Tibial artery (tissue), 4 donors: ENCODE measurements at regions of chr22 and their contacts with region 1.

Region 1: DNA sequence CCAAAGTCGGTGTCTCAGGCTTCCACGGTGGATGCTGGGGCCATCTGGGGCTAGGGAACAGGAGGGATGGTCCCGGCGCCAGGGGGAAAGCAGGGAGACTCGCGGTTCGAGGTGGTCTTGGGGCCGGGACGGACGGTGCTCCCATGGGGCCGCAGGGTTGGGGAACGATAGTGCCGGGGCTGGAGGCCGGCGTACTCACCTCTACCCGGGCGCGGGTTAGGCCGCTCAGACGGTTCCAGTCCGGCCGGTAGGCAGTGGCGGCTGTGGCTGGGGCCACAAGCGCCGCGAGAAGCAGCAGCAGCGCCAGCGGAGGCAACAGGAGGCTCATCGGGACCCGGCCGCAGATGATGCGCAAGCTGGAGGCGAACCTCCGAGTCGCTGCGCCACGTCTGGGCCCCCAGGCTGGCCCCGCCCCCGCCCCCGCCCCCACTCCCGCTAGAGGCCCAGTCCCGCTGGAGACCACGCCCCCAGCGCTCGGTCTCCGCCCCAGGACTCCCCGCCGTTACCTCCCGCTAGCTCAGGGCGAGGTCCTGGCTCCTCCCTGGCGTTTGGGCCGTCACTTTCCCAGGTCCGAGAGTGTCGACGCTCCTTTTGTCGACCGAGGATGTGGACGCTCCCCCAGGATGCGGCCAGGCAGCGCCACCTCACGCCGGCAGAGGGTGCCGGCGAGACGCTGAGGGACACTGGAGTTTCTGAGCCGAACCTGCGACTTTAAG is at the start of gene SELENOM:
- DNase-seq: peak; percentile 96 to 99
- H3K4me3 ChIP-seq: peak within 1 kb of the TSS; percentile 94 to 97
- H3K27ac ChIP-seq: peak within 1 kb of the TSS; percentile 99 to 100
- H3K4me1 ChIP-seq: peaks cover 0 to 48% (median 41%) of the 10 kb centered on the region in 4 donors
- H3K27me3 ChIP-seq: no peaks in the 10 kb centered on the region
- CTCF ChIP-seq: peak; percentile 95 to 98

Region 2: DNA sequence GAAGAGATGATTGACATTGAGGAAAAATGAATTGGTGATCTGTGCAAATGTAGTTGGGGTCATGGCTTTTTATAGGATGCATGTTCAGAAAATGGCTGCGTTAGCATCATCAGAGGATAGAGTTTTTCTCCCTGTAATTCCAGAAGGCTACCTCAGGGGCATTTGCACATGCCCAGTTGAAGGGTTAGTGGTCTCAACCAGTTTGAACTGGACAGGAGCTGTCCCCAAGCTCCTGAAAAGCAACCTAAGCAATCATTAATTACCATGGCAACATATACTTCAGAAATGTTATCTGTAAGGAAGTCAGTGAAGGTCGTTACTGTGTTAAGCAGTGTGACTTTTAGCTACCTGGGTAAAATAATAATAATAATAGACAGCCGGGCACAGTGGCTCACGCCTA is 109.0 kb before region 1 on chr22:
- intact Hi-C with region 1: no loop called
- DNase-seq: no peak
- H3K4me3 ChIP-seq: no peak overlapping the region
- H3K27ac ChIP-seq: peak overlapping the region in 1 of 2 donors; percentile 50
- H3K4me1 ChIP-seq: peaks cover 0 to 29% (median 2%) of the 10 kb centered on the region in 4 donors
- H3K27me3 ChIP-seq: no peaks in the 10 kb centered on the region
- CTCF ChIP-seq: no peak

Region 3: GRCh38 chr22:31089160-31090100 is 17.9 kb before region 1 on chr22:
- intact Hi-C with region 1: loop called (anchors 2 kb)
- DNase-seq: peak in 1 of 2 donors; percentile 81
- H3K4me3 ChIP-seq: no peak overlapping the region
- H3K27ac ChIP-seq: peak overlapping the region; percentile 99 to 100
- H3K4me1 ChIP-seq: peaks cover 0 to 94% (median 91%) of the 10 kb centered on the region in 4 donors
- H3K27me3 ChIP-seq: no peaks in the 10 kb centered on the region
- CTCF ChIP-seq: peak; percentile 79 to 85

Region 4: DNA sequence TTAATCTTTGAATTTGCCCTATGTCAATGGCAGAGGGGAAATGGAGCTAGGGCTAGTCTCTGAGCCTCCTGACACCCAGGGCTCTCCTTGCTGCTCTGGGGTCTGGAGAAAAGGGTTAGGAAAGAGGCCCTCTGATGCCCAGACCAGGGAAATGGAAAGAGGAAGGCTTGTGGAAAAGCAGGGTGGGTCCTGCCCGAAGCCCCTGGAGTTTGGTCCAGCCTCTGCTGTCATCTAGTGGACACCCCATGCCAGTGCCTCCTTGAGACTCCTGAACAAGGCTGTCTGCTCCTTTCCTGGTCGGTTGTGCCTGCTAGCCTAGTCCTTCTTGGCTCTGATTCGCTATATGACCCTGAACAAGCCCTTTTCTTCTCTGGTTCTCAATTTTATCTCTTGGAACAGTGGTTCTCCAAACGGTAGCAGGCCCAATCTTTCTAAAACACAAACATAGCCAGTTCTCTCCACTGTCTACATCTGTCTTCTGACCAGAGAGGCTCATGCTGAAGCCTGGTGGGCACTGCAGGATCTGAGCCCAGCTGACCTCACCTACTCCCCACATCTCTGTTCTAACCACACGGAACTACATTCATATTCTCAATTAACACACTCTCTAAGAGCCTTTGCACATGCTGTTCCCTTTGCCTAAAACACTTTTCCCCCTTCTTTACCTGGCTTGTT is 41.8 kb after region 1 on chr22:
- intact Hi-C with region 1: loop called (anchors 5 kb)
- DNase-seq: peak; percentile 61 to 82
- H3K4me3 ChIP-seq: no peak overlapping the region
- H3K27ac ChIP-seq: peak overlapping the region; percentile 62 to 74
- H3K4me1 ChIP-seq: peaks cover 0 to 31% (median 16%) of the 10 kb centered on the region in 4 donors
- H3K27me3 ChIP-seq: no peaks in the 10 kb centered on the region
- CTCF ChIP-seq: peak; percentile 91 to 95

Region 5: DNA sequence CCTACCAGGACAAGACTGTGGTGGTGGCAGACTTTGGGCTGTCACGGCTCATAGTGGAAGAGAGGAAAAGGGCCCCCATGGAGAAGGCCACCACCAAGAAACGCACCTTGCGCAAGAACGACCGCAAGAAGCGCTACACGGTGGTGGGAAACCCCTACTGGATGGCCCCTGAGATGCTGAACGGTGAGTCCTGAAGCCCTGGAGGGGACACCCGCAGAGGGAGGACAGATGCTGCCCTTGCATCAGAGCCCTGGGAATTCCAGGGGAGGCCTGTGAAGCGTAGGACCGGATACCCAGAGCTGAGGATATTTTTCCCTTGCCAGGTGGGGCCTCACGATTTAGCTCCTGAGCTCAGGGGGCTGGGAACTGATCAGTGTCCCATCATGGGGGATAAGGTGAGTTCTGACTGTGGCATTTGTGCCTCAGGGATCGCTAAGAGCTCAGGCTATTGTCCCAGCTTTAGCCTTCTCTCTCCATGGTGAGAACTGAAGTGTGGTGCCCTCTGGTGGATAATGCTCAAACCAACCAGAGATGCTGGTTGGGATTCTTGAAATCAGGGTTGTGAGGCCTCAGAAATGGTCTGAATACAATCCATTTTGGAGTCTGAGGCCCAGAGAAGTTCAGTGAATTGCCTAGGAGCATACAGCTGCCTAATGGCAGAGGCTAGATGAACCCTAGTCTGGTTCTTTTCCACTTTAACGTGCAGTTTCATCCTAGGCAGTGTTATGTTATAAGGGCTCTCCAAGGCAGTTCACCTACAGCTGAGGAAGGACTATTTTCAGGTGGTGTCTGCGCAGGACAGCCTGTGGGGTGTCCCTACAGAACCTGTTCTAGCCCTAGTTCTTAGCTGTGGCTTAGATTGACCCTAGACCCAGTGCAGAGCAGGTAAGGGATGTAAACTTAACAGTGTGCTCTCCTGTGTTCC is 165.4 kb after region 1 on chr22:
- intact Hi-C with region 1: loop called (anchors 5 kb)
- DNase-seq: peak; percentile 62 to 77
- H3K4me3 ChIP-seq: no peak overlapping the region
- H3K27ac ChIP-seq: peak overlapping the region in 1 of 2 donors; percentile 6
- H3K4me1 ChIP-seq: peaks cover 0 to 5% (median 0%) of the 10 kb centered on the region in 4 donors
- H3K27me3 ChIP-seq: no peaks in the 10 kb centered on the region
- CTCF ChIP-seq: peak; percentile 68 to 72